ENCODE measurements at regions of chr11 and their contacts with region 1.

Region 1: GRCh38 chr11:62542750-62543567 is 3.6 kb downstream of the AHNAK start:
- DNase-seq: no peak
- H3K4me3 ChIP-seq: peak overlapping the region; percentile 96
- H3K27me3 ChIP-seq: no peaks in the 10 kb centered on the region
- CTCF ChIP-seq: peak; percentile 100

Region 2: GRCh38 chr11:62444236-62444833 is 98.6 kb before region 1 on chr11:
- CTCF ChIA-PET with region 1: interaction called, 20 read pairs
- POLR2A ChIA-PET with region 1: no interaction called
- DNase-seq: no peak
- H3K4me3 ChIP-seq: peak overlapping the region; percentile 50
- H3K27me3 ChIP-seq: no peaks in the 10 kb centered on the region
- CTCF ChIP-seq: no peak

Region 3: DNA sequence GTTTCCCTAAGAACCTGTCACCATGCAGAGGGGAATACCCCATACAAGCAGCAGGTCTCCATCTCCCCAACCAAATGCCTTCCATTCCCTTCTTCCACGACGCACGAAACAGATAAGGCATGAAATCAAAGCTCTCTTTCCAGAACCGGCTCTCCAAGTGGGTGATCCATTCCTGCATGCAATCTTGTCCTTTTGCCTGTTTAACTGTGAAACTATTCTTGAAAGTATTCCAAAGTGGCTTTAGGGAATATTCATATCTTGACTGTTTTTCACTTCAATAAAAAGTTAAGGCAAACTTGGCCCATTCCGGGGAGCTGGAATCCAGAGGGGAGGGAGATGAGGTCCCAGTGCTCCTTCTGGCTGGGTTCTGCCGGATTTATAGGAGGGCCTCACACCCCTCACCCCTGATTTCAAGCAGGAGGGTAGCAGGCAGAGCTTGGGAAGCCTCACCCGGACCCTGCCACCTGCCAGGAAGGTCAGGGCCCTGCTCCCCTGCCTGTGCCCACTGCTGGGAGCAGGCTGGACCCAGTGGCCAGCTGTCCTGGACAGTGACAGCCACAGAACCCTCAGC is 63.2 kb before region 1 on chr11:
- CTCF ChIA-PET with region 1: interaction called, 6 read pairs
- POLR2A ChIA-PET with region 1: interaction called, 16 read pairs
- DNase-seq: no peak
- H3K4me3 ChIP-seq: no peak overlapping the region
- H3K27me3 ChIP-seq: no peaks in the 10 kb centered on the region
- CTCF ChIP-seq: no peak

Region 4: GRCh38 chr11:62508268-62509058 is 34.5 kb before region 1 on chr11:
- CTCF ChIA-PET with region 1: interaction called, 5 read pairs
- POLR2A ChIA-PET with region 1: interaction called, 12 read pairs
- DNase-seq: no peak
- H3K4me3 ChIP-seq: peak overlapping the region; percentile 5; the same call in 1 of the 2 replicates
- H3K27me3 ChIP-seq: no peaks in the 10 kb centered on the region
- CTCF ChIP-seq: peak; percentile 79

Region 5: GRCh38 chr11:62532096-62532495 is 10.9 kb before region 1 on chr11:
- CTCF ChIA-PET with region 1: no interaction called
- POLR2A ChIA-PET with region 1: no interaction called
- DNase-seq: no peak
- H3K4me3 ChIP-seq: no peak overlapping the region
- H3K27me3 ChIP-seq: no peaks in the 10 kb centered on the region
- CTCF ChIP-seq: no peak

Region 6: DNA sequence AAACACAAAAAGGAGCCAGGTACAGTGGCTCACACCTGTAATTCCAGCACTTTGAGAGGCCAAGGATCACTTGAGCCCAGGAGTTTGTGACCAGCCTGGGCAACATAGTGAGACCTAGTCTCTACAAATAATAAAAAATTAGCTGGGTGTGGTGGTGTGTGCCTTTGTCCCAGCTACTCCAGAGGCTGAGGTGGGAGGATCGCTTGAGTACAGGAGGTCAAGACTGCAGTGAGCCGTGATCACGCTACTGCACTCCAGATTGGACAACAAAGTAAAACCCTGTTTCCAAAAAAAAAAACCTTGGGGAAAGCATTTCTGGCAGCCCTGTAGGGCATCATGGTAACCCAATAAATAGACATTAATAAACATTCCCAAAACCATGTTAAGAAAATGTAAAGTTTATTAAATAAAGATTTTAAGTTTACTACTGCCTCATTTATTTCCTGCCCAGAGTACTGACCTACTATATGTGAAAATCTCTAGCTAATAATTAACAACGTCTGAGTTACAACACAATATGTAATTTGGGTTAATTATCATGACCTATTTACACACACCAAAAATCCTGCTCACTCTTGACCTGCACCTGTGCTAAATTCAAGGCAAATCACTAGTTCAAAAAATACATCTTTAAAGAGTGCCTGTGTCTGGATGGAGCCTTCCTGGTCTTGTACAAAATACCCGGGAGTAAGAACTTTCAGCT is 22.3 kb after region 1 on chr11:
- CTCF ChIA-PET with region 1: interaction called, 31 read pairs
- POLR2A ChIA-PET with region 1: interaction called, 4 read pairs
- DNase-seq: no peak
- H3K4me3 ChIP-seq: no peak overlapping the region
- H3K27me3 ChIP-seq: no peaks in the 10 kb centered on the region
- CTCF ChIP-seq: no peak

Region 7: GRCh38 chr11:62645956-62646824 is 103.2 kb after region 1 on chr11 and contains the start of gene GANAB:
- CTCF ChIA-PET with region 1: no interaction called
- POLR2A ChIA-PET with region 1: no interaction called
- DNase-seq: peak; percentile 87
- H3K4me3 ChIP-seq: peak within 1 kb of the TSS; percentile 73
- H3K27me3 ChIP-seq: no peaks in the 10 kb centered on the region
- CTCF ChIP-seq: no peak
- polyA plus RNA-seq, gene GANAB: 388 and 463 TPM in 2 replicates

Measured in BJ (cell line).